ENCODE measurements at regions of chr3 and their contacts with region 1.

Region 1: GRCh38 chr3:38346587-38347410 is at the start of gene XYLB:
- DNase-seq: peak; percentile 95
- H3K4me3 ChIP-seq: peak within 1 kb of the TSS; percentile 82 to 86
- H3K27ac ChIP-seq: peak within 1 kb of the TSS in 1 of 2 experiments; percentile 43; a peak in 1 of 4 replicates
- H3K4me1 ChIP-seq: peaks cover 0 to 12% of the 10 kb centered on the region in 2 experiments; a peak in 1 of 4 replicates
- H3K27me3 ChIP-seq: no peaks in the 10 kb centered on the region
- CTCF ChIP-seq: peak; percentile 69
- EP300 ChIP-seq: no peak
- RAD21 ChIP-seq: peak; percentile 66
- polyA plus RNA-seq, gene XYLB: 2.7 and 3.6 TPM in 2 replicates

Region 2: GRCh38 chr3:38009807-38010591 is 336.8 kb before region 1 on chr3:
- CTCF ChIA-PET with region 1: no interaction called
- POLR2A ChIA-PET with region 1: no interaction called
- DNase-seq: no peak
- H3K4me3 ChIP-seq: no peak overlapping the region
- H3K27ac ChIP-seq: no peak overlapping the region
- H3K4me1 ChIP-seq: no peaks in the 10 kb centered on the region; a peak in 1 of 4 replicates
- H3K27me3 ChIP-seq: no peaks in the 10 kb centered on the region
- CTCF ChIP-seq: no peak
- EP300 ChIP-seq: no peak
- RAD21 ChIP-seq: no peak

Region 3: DNA sequence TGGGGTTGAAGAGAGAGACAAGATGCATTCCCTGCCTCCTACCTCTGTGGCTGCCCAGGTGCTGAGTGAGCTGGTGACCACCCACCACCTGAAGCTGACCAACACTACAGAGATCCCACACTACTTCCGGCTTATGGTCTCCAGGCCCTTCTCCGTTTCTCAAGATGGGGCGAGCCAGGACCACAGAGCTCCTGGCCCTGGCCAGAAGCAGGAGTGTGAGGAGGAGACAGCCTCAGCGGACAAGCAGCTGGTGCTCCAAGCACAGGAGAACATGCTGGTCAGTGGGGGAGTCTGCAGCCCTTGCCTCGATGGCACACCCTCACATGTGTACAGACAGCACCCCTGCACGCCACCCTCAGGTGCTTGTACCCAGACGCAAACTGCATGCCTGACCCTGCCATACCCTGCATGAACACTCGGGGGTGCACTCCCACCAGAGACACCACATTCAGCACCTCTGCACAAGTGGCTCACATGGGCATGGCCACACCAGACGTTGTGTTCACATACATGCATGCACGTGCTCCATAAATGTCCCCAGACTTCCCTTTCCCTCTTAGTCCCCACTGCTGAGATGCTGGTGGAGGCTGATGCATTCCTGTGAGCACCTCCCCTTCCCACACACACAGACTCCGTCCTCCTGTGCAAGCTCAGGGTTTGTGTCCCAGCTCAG is 228.9 kb before region 1 on chr3:
- CTCF ChIA-PET with region 1: interaction called, 12 read pairs
- POLR2A ChIA-PET with region 1: interaction called, 4 read pairs
- DNase-seq: peak; percentile 80
- H3K4me3 ChIP-seq: no peak overlapping the region
- H3K27ac ChIP-seq: no peak overlapping the region
- H3K4me1 ChIP-seq: no peaks in the 10 kb centered on the region
- H3K27me3 ChIP-seq: no peaks in the 10 kb centered on the region
- CTCF ChIP-seq: peak; percentile 70
- EP300 ChIP-seq: no peak
- RAD21 ChIP-seq: peak; percentile 74

Region 4: DNA sequence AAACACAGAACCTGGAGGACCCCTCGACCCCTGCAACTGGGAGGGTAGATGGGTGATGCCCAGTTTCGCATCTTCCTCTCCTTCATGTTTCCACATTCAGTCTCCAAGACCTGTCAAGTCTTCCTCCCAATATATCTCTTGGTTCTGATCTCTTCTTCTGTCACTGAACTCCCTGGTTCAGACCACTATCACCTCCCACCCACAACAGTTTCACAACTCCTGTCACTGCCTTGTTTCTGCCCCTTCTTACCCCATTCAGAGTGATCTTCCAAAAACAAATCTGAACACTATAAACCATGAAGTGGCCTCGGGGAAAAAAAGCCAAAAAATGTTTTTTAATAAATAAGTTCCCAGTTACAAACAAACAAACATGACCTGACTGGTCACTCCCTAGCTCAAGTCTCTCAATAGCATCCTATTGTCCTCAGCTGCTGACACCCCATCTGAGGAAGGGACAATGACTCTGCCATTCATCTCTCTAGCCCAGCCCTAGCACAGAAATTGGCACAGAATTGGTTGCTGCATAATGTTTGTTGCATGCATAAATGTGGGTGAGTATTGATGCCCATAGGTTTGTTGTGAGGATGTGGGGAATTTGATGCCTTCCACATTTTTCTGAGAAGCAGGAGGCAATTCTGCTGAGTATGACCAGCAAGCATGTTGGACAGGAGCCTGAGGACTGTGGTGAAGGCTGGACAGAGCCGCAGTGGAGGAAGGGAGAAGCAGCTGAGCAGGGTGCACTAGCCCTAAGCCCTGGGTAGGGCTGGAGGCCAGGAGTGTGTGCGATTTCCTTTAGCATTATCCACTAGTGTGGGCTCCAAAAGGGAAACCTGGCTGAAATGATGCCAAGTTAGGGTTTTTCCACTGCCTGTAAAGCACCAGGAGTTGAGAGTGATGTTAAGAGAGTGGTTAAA is 12.4 kb before region 1 on chr3:
- CTCF ChIA-PET with region 1: interaction called, 27 read pairs
- POLR2A ChIA-PET with region 1: no interaction called
- DNase-seq: no peak
- H3K4me3 ChIP-seq: 0 out of 4 replicates have a peak overlapping the region, but pooled peaks of 1 of the 2 experiments have one; percentile 2
- H3K27ac ChIP-seq: no peak overlapping the region
- H3K4me1 ChIP-seq: no peaks in the 10 kb centered on the region
- H3K27me3 ChIP-seq: no peaks in the 10 kb centered on the region; the same call in 1 of the 2 replicates
- CTCF ChIP-seq: no peak
- EP300 ChIP-seq: no peak
- RAD21 ChIP-seq: no peak

Region 5: GRCh38 chr3:38473229-38473628 is 126.4 kb after region 1 on chr3:
- CTCF ChIA-PET with region 1: interaction called, 146 read pairs
- POLR2A ChIA-PET with region 1: no interaction called
- DNase-seq: no peak
- H3K4me3 ChIP-seq: no peak overlapping the region
- H3K27ac ChIP-seq: no peak overlapping the region
- H3K4me1 ChIP-seq: peaks cover 0 to 26% of the 10 kb centered on the region in 2 experiments; a peak in 1 of 4 replicates
- H3K27me3 ChIP-seq: no peaks in the 10 kb centered on the region
- CTCF ChIP-seq: no peak
- EP300 ChIP-seq: no peak
- RAD21 ChIP-seq: no peak

Region 6: DNA sequence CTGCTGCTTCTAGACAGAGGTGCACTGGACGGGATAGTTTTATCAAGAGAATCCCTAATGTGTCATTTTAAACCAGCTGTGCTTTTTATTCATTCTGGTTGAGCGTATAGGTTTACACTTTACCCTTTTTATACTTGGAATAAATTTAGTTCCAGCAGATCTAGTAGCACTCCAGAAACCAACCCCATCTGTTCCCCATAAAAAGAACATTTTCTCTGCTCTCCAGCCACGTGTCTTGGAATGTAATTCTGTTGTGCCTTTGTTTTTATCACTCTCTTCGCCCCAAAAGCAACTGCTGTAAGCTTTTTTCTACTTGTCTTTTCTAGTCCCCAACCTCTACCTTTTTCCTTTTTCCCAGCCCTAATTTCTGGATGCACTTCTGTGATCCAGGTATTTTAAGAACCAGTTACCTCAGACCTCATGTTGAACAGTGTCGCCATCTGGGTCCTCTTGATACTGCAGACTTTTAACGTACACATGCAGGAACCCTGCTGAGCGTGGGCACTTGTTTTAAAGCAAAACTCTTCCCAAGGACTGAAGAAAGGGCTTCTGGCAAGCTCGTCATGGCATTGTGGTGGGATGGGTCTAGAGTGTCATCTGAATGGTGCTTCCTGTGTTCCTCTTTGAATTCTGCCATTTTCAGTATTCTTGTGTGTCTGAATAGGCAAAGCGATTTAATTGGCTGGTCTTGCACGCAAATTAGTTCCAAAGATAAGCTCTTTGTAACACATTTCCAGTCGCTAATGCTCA is 143.7 kb after region 1 on chr3:
- CTCF ChIA-PET with region 1: interaction called, 15 read pairs
- POLR2A ChIA-PET with region 1: no interaction called
- DNase-seq: no peak
- H3K4me3 ChIP-seq: no peak overlapping the region
- H3K27ac ChIP-seq: no peak overlapping the region
- H3K4me1 ChIP-seq: peaks cover 0 to 7% of the 10 kb centered on the region in 2 experiments; a peak in 1 of 4 replicates
- H3K27me3 ChIP-seq: no peaks in the 10 kb centered on the region
- CTCF ChIP-seq: no peak
- EP300 ChIP-seq: no peak
- RAD21 ChIP-seq: no peak

Region 7: GRCh38 chr3:38528457-38528856 is 181.7 kb after region 1 on chr3:
- CTCF ChIA-PET with region 1: no interaction called
- POLR2A ChIA-PET with region 1: no interaction called
- DNase-seq: peak; percentile 60
- H3K4me3 ChIP-seq: no peak overlapping the region
- H3K27ac ChIP-seq: no peak overlapping the region
- H3K4me1 ChIP-seq: peaks cover 2 to 4% of the 10 kb centered on the region in 2 experiments; a peak in 1 of 4 replicates
- H3K27me3 ChIP-seq: no peaks in the 10 kb centered on the region
- CTCF ChIP-seq: no peak; the same call in 1 of the 2 replicates
- EP300 ChIP-seq: no peak
- RAD21 ChIP-seq: peak; percentile 66